Activated CD4-positive, alpha-beta T cell treated with anti-CD3 and anti-CD28 coated beads, Interleukin-2, amount 10 ng/mL, durations not matched to agents 24 days and 14 days (primary cell): ENCODE measurements at regions of chr4 and their contacts with region 1.

Region 1: GRCh38 chr4:128287871-128288688 is 467 bp upstream of the PGRMC2 start:
- DNase-seq: peak; percentile 99
- H3K4me3 Mint-ChIP-seq: peak overlapping the region; percentile 85
- H3K27ac Mint-ChIP-seq: peak overlapping the region; percentile 94
- H3K4me1 Mint-ChIP-seq: peaks cover 19% of the 10 kb centered on the region
- H3K27me3 Mint-ChIP-seq: no peaks in the 10 kb centered on the region

Region 2: GRCh38 chr4:127782274-127783025 is 505.6 kb before region 1 on chr4 and contains the start of gene HSPA4L:
- intact Hi-C with region 1: loop called (anchors 2 kb)
- DNase-seq: peak; percentile 89
- H3K4me3 Mint-ChIP-seq: peak within 1 kb of the TSS; percentile 94
- H3K27ac Mint-ChIP-seq: peak within 1 kb of the TSS; percentile 91
- H3K4me1 Mint-ChIP-seq: peaks cover 18% of the 10 kb centered on the region
- H3K27me3 Mint-ChIP-seq: peaks cover 72% of the 10 kb centered on the region
- total RNA-seq, gene HSPA4L: 1.3 and 1.7 TPM in 2 replicates

Region 3: DNA sequence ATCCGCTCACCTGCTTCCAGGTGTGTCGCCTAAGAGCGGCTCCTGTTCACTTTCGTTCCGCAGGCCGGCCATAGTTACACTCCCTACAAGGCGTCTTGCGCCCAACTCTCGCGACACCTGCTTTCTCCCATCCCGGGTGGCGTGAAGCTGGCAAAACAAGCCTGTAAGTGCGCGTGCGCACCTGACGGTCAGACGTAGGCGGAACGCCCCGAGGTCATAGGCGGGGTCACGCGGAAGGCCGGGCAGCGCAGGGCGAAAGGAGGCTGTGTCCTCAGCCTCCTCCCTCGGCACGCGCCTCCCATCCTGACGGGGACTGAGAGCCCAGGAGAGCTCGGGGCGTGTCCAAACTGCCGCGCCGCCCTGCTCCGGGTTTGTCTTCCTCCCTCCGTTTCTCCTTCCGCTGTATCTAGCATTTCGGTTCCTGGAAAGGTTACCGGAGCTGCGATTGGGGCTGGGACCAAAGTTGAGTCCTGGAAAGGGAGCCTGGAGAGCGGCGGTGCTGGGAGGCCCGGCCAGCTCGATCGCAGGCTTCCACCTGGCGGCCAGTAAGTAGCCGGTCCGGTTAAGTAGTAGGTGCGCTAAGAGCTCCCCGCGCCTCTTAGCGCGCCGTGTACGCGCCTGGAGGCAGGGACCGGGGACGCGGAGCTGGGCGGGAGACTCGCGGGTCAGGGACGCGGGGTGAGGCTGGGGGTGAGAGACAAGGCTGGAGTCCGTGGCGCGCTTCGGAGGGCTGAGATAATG is 322.8 kb before region 1 on chr4 and contains the starts of genes ABHD18 and MFSD8:
- intact Hi-C with region 1: loop called (anchors 1 kb)
- DNase-seq: peak; percentile 100
- H3K4me3 Mint-ChIP-seq: peak within 1 kb of the TSS; percentile 97
- H3K27ac Mint-ChIP-seq: peak within 1 kb of the TSS; percentile 97
- H3K4me1 Mint-ChIP-seq: peaks cover 31% of the 10 kb centered on the region
- H3K27me3 Mint-ChIP-seq: peaks cover 2% of the 10 kb centered on the region
- total RNA-seq, gene ABHD18: 17.3 and 18.5 TPM in 2 replicates
- total RNA-seq, gene MFSD8: 21.5 and 21.8 TPM in 2 replicates

Region 4: GRCh38 chr4:128191115-128191781 is 96.8 kb before region 1 on chr4:
- intact Hi-C with region 1: loop called (anchors 2 kb)
- DNase-seq: peak; percentile 89
- H3K4me3 Mint-ChIP-seq: no peak overlapping the region
- H3K27ac Mint-ChIP-seq: no peak overlapping the region
- H3K4me1 Mint-ChIP-seq: peaks cover 11% of the 10 kb centered on the region
- H3K27me3 Mint-ChIP-seq: no peaks in the 10 kb centered on the region

Region 5: DNA sequence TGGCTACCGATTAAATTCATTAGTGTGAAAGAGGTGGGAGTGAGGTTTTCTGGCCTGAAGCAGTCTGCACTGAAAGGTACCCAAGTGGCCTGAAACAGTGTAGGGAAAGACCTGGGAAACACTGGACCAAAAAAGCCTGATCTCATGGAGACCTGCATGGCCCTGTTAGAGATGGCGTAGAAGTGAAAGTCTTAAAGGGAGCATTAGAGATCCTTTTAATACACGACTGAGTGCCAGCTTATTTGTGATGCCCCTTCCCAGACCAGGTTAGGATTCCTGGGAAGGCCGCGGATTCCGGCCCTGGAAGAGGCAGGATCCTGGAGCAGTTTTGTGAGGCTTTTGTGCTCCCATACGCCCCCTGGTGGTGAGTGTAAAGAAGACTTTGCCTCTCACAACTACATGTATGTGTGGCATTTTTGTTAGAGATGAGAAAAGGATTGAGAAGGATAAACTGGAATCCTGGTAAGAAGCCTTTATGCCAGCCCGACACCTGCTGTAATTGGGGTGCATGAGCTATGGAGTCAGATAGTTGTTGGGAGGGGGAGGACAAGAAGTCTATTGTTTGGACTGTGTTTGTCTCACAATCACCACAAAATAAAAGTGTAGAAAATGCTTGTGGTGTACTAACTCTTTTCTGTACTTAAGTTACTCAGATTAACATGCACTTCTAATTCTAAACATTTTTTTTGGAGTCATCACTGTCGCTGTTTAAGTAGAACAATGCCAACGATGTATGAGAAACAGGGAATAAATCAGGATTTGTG is 575.4 kb after region 1 on chr4:
- intact Hi-C with region 1: loop called (anchors 5 kb)
- DNase-seq: peak; percentile 88
- H3K4me3 Mint-ChIP-seq: peak overlapping the region; percentile 42
- H3K27ac Mint-ChIP-seq: peak overlapping the region; percentile 86
- H3K4me1 Mint-ChIP-seq: peaks cover 44% of the 10 kb centered on the region
- H3K27me3 Mint-ChIP-seq: no peaks in the 10 kb centered on the region